Dendritic cell treated with granulocyte-macrophage colony-stimulating factor and Interleukin-4, amounts not matched to agents 40 ng/mL and 50 ng/mL, for 4 days (primary cell): ENCODE measurements at regions of chr11 and their contacts with region 1.

Region 1: GRCh38 chr11:102007567-102008437 is 39.4 kb upstream of the CFAP300 start:
- H3K4me3 Mint-ChIP-seq: no peak overlapping the region
- H3K27ac Mint-ChIP-seq: no peak overlapping the region
- H3K4me1 Mint-ChIP-seq: no peaks in the 10 kb centered on the region
- H3K27me3 Mint-ChIP-seq: peaks cover 19% of the 10 kb centered on the region

Region 2: GRCh38 chr11:100575870-100576705 is 1431.7 kb before region 1 on chr11:
- intact Hi-C with region 1: loop called (anchors 5 kb)
- H3K4me3 Mint-ChIP-seq: no peak overlapping the region
- H3K27ac Mint-ChIP-seq: no peak overlapping the region
- H3K4me1 Mint-ChIP-seq: no peaks in the 10 kb centered on the region
- H3K27me3 Mint-ChIP-seq: no peaks in the 10 kb centered on the region

Region 3: GRCh38 chr11:101456812-101457211 is 551.0 kb before region 1 on chr11:
- intact Hi-C with region 1: loop called (anchors 5 kb)
- H3K4me3 Mint-ChIP-seq: no peak overlapping the region
- H3K27ac Mint-ChIP-seq: no peak overlapping the region
- H3K4me1 Mint-ChIP-seq: no peaks in the 10 kb centered on the region
- H3K27me3 Mint-ChIP-seq: no peaks in the 10 kb centered on the region

Region 4: DNA sequence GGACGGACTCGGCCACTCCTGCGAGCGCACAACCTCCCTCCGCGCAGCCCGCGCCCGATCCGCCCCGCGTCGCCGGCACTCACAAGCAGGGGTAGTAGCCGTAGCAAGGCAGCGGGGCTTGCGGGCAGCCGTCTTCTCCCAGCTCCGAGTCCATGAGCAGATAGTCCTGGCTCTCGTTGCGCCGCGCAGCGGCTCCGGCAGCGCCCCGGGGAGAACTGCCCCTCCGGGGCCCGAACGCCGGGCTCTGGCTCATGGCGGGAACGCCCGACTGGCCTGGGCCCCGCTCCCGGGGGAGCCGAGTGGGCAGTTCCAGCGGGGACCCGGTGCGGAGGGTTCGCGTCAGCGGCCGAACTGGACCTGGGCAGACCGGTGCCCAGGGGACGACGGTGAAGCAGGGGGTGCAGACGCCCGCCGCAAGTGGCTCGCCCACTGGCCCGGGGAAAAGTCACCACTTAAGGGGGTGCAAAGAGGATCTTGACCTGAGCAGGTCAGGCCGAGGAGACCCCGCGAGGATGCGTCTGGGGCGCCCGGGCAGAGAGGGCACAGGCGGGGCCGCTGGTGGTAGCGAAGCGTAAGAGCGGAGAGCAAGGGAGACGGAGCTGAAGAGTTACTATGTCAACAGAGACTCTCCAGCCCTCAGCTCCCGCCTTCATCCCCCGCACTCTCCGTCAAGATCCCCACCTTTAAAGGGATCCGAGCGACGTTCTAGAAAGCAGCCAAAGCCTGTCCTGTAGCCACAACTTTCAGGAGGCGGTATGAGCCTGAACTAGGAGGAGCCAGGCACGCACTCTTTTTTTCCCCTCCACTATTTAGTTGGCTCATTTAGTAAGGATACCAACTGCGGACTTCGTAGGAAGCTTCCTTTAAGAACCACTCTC is 424.3 kb before region 1 on chr11 and contains the start of gene TRPC6:
- intact Hi-C with region 1: no loop called
- H3K4me3 Mint-ChIP-seq: no peak within 1 kb of the TSS
- H3K27ac Mint-ChIP-seq: no peak within 1 kb of the TSS
- H3K4me1 Mint-ChIP-seq: no peaks in the 10 kb centered on the region
- H3K27me3 Mint-ChIP-seq: peaks cover 37% of the 10 kb centered on the region

Region 5: GRCh38 chr11:101860696-101861427 is 146.9 kb before region 1 on chr11:
- intact Hi-C with region 1: loop called (anchors 1 kb)
- H3K4me3 Mint-ChIP-seq: no peak overlapping the region
- H3K27ac Mint-ChIP-seq: no peak overlapping the region
- H3K4me1 Mint-ChIP-seq: no peaks in the 10 kb centered on the region
- H3K27me3 Mint-ChIP-seq: no peaks in the 10 kb centered on the region

Region 6: GRCh38 chr11:102357116-102357515 is 349.3 kb after region 1 on chr11:
- intact Hi-C with region 1: no loop called
- H3K4me3 Mint-ChIP-seq: no peak overlapping the region
- H3K27ac Mint-ChIP-seq: no peak overlapping the region
- H3K4me1 Mint-ChIP-seq: peaks cover 38% of the 10 kb centered on the region
- H3K27me3 Mint-ChIP-seq: no peaks in the 10 kb centered on the region